PC-3 (cell line): ENCODE measurements at regions of chr1 and their contacts with region 1.

Region 1: DNA sequence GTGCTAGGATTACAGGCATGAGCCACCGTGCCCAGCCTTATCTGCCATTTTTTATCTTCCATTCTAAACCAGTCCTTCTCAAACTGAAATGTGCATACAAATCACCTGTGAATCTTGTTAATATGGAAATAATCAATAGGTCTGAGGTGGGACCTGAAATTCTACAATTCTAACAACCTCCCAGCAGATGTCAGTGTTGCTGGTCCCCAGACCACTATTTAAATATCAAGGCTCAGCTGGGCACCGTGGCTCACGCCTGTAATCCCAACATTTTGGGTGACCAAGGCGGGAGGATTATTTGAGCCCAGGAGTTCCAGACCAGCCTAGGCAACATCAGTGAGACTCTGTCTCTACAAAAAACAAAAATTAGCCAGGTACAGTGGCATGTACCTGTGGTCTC is 4.1 kb downstream of the UQCRHL start:
- DNase-seq: peak; percentile 59
- ATAC-seq: no peak
- H3K4me3 ChIP-seq: no peak overlapping the region
- H3K27ac ChIP-seq: no peak overlapping the region
- H3K4me1 ChIP-seq: peaks cover 46% of the 10 kb centered on the region
- H3K27me3 ChIP-seq: no peaks in the 10 kb centered on the region
- CTCF ChIP-seq: peak; percentile 59

Region 2: DNA sequence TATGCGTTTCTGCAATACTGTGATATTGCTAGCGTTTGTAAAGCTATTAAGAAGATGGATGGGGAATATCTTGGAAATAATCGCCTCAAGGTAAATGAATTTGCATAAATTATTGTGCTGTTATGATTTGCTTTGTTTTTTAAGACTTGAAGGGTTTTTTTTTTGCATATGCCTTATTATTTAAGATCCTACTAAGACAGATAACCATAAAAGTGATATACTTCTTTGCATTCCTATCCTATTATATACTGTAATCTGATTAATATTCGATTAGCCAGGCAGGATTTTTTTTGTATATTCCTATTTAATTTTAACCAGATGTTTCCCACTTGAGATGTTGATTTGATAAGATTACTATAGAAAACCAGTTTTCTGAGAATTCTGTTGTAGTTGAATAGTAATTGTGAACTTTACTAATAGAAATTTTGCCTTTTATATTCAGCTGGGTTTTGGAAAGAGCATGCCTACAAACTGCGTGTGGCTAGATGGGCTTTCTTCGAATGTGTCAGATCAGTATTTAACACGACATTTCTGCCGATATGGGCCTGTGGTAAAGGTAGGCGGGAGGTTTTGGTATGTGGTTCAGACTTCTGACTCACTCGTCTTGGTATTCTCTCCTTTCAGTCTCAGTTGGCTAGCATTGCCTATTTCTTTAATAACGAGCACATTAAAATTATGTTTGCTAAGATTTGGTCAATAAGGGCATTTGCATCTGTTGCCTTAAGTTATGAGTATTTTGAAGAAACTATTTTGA is 115.8 kb after region 1 on chr1:
- CTCF ChIA-PET with region 1: no interaction called
- POLR2A ChIA-PET with region 1: no interaction called
- intact Hi-C with region 1: loop called (anchors 5 kb)
- DNase-seq: peak; percentile 85
- ATAC-seq: peak; percentile 92
- H3K4me3 ChIP-seq: no peak overlapping the region
- H3K27ac ChIP-seq: peak overlapping the region; percentile 5
- H3K4me1 ChIP-seq: peaks cover 52% of the 10 kb centered on the region
- H3K27me3 ChIP-seq: no peaks in the 10 kb centered on the region
- CTCF ChIP-seq: no peak

Region 3: DNA sequence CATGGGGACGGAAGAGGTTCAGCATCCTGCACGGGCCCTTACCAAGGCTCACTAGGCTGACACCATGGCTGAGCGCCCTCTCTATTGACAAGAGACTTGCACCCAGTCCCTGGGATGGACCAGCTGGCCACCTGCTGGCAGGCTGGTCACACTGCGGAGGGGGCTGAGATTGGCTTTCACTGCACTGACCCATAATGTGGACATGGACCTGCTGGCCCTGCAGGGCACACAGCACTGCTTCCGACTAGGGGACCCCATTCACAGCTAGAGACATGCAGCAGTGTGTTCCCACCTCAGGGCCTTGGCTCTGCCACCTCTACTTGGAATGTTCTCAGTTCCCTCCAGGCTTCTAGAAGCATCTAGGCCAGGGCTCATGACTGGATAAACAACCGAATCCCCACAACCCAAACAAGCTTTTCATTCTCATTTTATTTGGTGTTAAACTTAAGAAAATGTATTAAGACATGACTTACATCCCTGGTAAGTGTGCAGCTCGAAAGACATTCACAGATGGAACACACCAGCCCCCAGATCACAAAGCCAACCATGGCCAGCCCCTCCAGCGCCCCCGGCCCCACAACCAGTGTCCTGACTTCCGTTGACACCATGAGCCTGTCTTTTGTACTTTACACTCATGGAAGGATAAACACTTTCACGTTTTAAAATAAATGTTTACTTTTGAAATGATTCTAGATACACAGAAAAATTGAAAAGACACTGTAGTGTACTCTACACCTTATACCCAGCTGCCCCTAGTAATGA is 191.4 kb after region 1 on chr1:
- CTCF ChIA-PET with region 1: no interaction called
- POLR2A ChIA-PET with region 1: no interaction called
- intact Hi-C with region 1: loop called (anchors 2 kb)
- DNase-seq: peak; percentile 68
- ATAC-seq: peak; percentile 93
- H3K4me3 ChIP-seq: no peak overlapping the region
- H3K27ac ChIP-seq: no peak overlapping the region
- H3K4me1 ChIP-seq: no peaks in the 10 kb centered on the region
- H3K27me3 ChIP-seq: no peaks in the 10 kb centered on the region
- CTCF ChIP-seq: peak; percentile 84